Colonic mucosa (tissue), 4 donors: ENCODE measurements at regions of chr6 and their contacts with region 1.

Region 1: DNA sequence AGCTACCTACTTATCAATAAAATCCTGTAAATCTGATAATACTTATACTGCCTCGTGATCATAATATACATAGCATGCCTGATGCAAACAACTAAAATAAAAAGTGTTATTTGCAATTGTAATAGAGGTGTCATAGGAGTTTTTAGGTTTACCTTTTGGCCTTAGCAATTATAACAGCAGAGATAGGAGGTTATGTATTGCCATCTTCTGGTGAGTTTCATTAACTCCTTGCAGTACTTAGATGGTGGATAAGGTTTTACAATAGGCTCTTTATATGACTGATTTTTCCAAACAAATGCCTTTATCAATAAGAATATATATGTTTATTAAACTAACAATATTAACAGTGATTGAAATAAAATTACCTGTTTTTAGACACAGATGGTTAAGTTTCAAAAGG is 27.8 kb upstream of the MYCT1 start:
- DNase-seq: no peak
- H3K4me3 ChIP-seq: no peak overlapping the region
- H3K27ac ChIP-seq: no peak overlapping the region
- H3K4me1 ChIP-seq: no peaks in the 10 kb centered on the region
- H3K27me3 ChIP-seq: no peaks in the 10 kb centered on the region
- CTCF ChIP-seq: no peak

Region 2: DNA sequence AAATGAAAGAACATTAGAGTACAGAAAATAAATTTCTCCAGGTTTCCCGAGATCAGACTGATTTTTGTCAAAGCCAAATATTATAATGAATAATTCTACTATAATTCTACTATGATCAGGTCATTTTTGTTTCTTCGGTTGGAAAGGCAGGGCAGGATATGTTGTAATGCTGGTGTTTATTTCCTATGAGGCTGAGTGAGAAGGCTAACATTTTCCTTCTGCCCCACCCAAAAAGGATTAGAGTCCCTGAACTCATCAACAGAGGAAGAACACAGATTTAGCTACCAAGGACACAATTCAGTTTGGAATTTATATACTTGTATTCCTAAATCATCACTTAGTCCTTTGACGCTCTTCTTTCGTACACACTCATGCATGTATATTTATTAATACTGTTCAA is 351.6 kb before region 1 on chr6:
- intact Hi-C with region 1: no loop called
- DNase-seq: no peak
- H3K4me3 ChIP-seq: no peak overlapping the region
- H3K27ac ChIP-seq: no peak overlapping the region
- H3K4me1 ChIP-seq: no peaks in the 10 kb centered on the region
- H3K27me3 ChIP-seq: no peaks in the 10 kb centered on the region
- CTCF ChIP-seq: no peak

Region 3: DNA sequence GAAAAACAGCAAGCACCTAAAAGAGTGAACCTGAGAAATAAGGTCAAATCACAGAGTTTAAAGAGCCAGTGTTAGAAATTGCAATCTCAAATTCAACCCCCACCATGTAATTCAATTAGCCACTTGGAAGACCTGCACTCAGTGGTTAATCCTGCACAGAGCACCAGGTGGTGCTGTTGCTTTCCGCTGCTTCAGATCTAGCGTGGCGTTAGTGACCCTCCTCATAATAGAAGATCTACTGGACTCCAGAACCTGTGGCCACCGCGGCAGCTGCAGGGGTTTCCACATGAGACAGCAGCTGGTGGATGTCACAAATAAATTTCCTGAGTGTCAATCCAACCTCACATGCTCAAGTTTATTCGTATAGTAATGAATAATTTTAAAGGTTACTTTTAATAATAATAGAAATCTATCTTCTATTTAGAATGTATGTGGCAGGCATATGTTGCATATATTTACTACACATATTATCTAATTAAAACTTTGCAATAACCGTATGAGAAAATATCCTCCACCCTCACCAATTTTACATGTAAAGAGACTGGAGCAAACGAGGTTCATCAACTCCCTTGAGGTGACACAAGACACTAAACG is 117.2 kb before region 1 on chr6:
- intact Hi-C with region 1: loop called (anchors 10 kb)
- DNase-seq: peak; percentile 20
- H3K4me3 ChIP-seq: no peak overlapping the region
- H3K27ac ChIP-seq: no peak overlapping the region
- H3K4me1 ChIP-seq: no peaks in the 10 kb centered on the region
- H3K27me3 ChIP-seq: no peaks in the 10 kb centered on the region
- CTCF ChIP-seq: peak; percentile 39

Region 4: GRCh38 chr6:153618805-153619215 is 948.9 kb after region 1 on chr6:
- intact Hi-C with region 1: no loop called
- DNase-seq: no peak
- H3K4me3 ChIP-seq: no peak overlapping the region
- H3K27ac ChIP-seq: no peak overlapping the region
- H3K4me1 ChIP-seq: no peaks in the 10 kb centered on the region
- H3K27me3 ChIP-seq: no peaks in the 10 kb centered on the region
- CTCF ChIP-seq: no peak